Ascending aorta (tissue), 2 donors: ENCODE measurements at regions of chr5 and their contacts with region 1.

Region 1: GRCh38 chr5:43661102-43661501 is 58.1 kb downstream of the NNT start:
- DNase-seq: no peak
- H3K4me3 ChIP-seq: no peak overlapping the region
- H3K27ac ChIP-seq: no peak overlapping the region
- H3K4me1 ChIP-seq: peaks cover 0 to 6% of the 10 kb centered on the region in 2 donors
- H3K27me3 ChIP-seq: no peaks in the 10 kb centered on the region
- CTCF ChIP-seq: peak; percentile 16 to 67 (median 64)

Region 2: DNA sequence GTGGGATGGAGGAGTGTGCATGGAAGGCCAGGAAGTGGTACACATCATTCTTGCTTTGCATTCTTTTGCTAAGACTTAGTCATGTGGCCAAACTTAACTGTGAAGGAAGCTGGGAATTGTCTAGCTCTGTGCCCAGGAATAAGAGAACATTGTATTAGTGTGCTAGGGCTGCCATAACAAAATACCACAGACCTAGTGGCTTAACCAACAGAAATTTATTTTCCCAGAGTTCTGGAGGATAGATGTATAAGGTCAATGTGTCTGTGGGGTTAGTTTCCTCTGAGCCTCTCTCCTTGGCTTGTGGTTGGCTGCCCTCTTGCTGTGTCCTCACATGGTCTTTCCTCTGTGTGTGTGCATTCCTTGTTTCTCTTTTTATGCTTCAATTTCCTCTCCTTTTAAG is 25.7 kb before region 1 on chr5:
- intact Hi-C with region 1: no loop called
- DNase-seq: no peak
- H3K4me3 ChIP-seq: peak overlapping the region in 1 of 2 donors; percentile 8
- H3K27ac ChIP-seq: peak overlapping the region; percentile 18 to 77
- H3K4me1 ChIP-seq: peaks cover 0 to 48% of the 10 kb centered on the region in 2 donors
- H3K27me3 ChIP-seq: no peaks in the 10 kb centered on the region
- CTCF ChIP-seq: no peak

Region 3: DNA sequence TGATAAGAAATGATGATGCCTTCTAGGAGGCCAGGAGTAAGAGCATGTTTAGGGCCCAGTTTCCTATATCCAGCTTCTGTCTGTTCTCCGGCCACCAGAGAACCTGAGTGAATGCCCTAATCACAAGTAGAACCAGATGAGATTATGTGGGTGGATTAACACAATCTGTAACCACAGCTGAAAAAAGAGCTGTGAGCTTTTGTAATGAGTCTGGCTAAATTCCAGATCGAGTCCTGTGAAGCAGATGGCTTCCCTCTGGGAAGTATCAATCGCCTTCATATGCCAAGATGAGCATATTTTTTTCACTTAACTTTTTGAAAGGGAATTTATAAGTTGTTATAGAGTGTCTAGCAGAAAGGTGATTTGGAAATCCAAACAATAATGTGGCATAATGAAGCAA is 41.7 kb after region 1 on chr5:
- intact Hi-C with region 1: loop called (anchors 5 kb)
- DNase-seq: no peak
- H3K4me3 ChIP-seq: no peak overlapping the region
- H3K27ac ChIP-seq: no peak overlapping the region
- H3K4me1 ChIP-seq: no peaks in the 10 kb centered on the region
- H3K27me3 ChIP-seq: no peaks in the 10 kb centered on the region
- CTCF ChIP-seq: no peak